Endothelial cell of umbilical vein (primary cell): ENCODE measurements at regions of chr2 and their contacts with region 1.

Region 1: DNA sequence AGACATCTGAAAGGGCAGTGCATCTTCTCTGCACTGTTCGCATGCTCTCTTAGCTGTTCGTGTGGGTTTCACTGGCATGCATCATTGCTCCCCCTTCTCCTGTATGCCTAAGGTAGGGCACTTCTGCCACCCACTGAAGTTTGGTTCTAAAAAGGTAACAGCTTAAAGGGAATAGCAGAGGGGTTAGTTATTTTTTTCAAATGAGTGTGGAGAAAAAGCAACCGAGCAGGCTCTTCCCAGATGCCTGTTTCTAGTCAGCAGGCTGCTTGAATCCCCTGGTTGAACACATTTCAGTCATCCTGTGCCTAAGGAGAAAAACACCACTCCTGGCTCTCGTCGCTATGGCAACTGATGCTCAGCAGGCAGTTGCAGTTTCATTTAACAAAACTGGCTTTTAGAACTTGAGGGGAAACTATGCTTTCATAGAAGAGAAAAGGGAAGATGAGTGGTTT is 69.8 kb upstream of the GALNT3 start:
- DNase-seq: no peak
- H3K4me3 ChIP-seq: no peak overlapping the region
- H3K27ac ChIP-seq: no peak overlapping the region
- H3K4me1 ChIP-seq: no peaks in the 10 kb centered on the region
- H3K27me3 ChIP-seq: no peaks in the 10 kb centered on the region
- CTCF ChIP-seq: no peak
- POLR2A ChIP-seq: no peak

Region 2: GRCh38 chr2:165627470-165627869 is 236.4 kb before region 1 on chr2:
- CTCF ChIA-PET with region 1: no interaction called
- POLR2A ChIA-PET with region 1: no interaction called
- dilution Hi-C with region 1: no loop called
- intact Hi-C with region 1: loop called (anchors 10 kb)
- DNase-seq: peak; percentile 17
- H3K4me3 ChIP-seq: no peak overlapping the region
- H3K27ac ChIP-seq: no peak overlapping the region
- H3K4me1 ChIP-seq: peaks cover 3% of the 10 kb centered on the region
- H3K27me3 ChIP-seq: peaks cover 4% of the 10 kb centered on the region in 2 experiments
- CTCF ChIP-seq: no peak
- POLR2A ChIP-seq: no peak